ENCODE measurements at regions of chr3 and their contacts with region 1.

Region 1: DNA sequence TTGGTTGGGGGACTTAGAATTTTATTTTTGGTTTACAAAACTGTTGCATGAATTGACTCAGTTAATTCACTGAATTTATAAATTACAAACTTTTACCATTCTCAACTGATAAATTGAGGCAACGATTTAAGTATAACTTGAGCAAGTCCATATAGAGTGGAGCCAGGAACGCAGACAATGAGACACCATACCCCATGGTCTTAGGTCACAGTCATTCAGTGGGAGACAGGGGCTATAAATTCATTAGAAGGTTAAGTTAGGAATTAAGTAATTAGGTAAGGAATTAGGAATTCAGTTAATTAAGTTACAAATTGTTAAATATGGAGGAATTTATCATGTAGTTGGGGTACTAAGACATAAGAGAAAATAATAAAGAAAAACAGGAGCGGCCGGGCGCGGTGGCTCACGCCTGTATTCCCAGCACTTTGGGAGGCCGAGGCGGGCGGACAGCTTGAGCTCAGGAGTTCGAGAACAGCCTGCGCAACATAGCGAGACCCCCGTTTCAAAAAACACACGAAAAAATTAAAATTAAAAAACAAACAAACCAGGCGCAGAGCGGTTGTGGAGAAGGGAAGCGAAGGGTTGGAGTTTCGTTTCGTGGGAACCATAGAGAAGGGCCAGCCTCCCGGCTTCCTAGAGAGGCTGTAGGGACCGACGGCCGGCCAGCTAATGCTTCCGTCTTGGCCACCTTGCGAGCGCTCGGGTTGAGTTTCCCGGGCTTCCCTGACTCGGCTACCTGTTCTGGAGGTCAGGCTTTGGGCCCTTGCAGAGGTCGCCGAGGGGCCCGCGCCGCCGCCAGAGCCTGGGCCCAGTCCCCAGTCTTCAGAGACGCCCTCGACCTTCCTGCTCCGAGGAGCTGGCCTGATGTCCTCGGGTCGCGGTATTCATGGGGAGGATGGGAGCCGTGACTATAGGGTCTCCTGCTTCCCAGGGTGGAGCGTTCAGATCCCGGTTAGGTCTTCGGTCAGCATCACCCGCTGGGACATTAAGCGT is at the start of gene ZNF619:
- DNase-seq: peak; percentile 64
- ATAC-seq: peak; percentile 79
- H3K4me3 Mint-ChIP-seq: peak within 1 kb of the TSS; percentile 80
- H3K27ac Mint-ChIP-seq: peak within 1 kb of the TSS; percentile 83
- H3K4me1 Mint-ChIP-seq: peaks cover 15% of the 10 kb centered on the region
- H3K27me3 Mint-ChIP-seq: no peaks in the 10 kb centered on the region
- total RNA-seq, gene ZNF619: 5.6 to 7.0 TPM

Region 2: DNA sequence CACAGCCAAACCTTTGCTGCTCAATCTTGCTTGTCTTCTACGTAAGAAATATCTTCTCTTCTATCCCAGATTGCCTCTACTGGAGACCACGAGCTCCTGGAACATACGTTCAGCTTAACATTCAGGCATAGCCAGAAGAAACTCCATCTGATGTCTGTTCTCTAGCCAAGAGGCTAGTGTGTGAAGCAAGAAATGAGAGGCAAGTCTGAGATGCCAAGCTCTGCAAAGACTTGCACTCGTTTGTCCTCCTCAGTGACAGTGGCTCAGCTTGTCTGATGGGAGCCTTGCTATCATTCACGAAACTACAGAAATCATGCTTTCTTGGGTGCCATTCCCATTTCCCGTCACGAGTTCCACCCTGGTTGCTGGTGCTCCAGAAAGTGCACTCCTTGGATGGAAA is 1660.7 kb before region 1 on chr3 and contains the start of gene SCN10A:
- CTCF ChIA-PET with region 1: no interaction called
- POLR2A ChIA-PET with region 1: no interaction called
- intact Hi-C with region 1: no loop called
- DNase-seq: no peak
- ATAC-seq: no peak
- H3K4me3 Mint-ChIP-seq: no peak within 1 kb of the TSS
- H3K27ac Mint-ChIP-seq: no peak within 1 kb of the TSS
- H3K4me1 Mint-ChIP-seq: no peaks in the 10 kb centered on the region
- H3K27me3 Mint-ChIP-seq: peaks cover 8% of the 10 kb centered on the region
- total RNA-seq, gene SCN10A: not detected

Region 3: DNA sequence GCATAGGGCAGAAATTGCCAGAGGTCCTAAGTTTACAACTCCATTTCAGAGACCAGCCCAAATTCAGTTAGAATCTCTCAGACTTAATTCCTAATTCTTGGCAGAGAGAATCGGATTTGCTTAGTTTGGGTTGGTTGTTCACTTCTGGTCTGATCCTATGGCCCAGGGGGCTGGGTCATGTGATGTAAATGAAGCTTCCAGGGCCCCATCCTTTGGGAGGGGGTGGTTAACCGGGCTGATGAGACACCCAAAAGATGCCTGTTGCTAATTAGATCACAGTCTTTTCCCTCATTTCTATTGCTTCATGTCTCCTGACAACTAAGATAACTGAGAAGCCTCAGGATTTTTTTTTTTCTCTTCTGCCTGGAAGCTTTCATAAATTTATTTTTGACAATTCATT is 17.9 kb after region 1 on chr3:
- CTCF ChIA-PET with region 1: interaction called, 12 read pairs
- POLR2A ChIA-PET with region 1: no interaction called
- intact Hi-C with region 1: no loop called
- DNase-seq: no peak
- ATAC-seq: no peak
- H3K4me3 Mint-ChIP-seq: no peak overlapping the region
- H3K27ac Mint-ChIP-seq: no peak overlapping the region
- H3K4me1 Mint-ChIP-seq: no peaks in the 10 kb centered on the region
- H3K27me3 Mint-ChIP-seq: no peaks in the 10 kb centered on the region

Region 4: GRCh38 chr3:40505599-40506462 is 29.1 kb after region 1 on chr3 and contains the start of gene ZNF620:
- CTCF ChIA-PET with region 1: interaction called, 4 read pairs
- POLR2A ChIA-PET with region 1: no interaction called
- intact Hi-C with region 1: loop called in 1 of 2 experiments (anchors 2 kb)
- DNase-seq: peak; percentile 59
- ATAC-seq: peak; percentile 67
- H3K4me3 Mint-ChIP-seq: peak within 1 kb of the TSS; percentile 86
- H3K27ac Mint-ChIP-seq: peak within 1 kb of the TSS; percentile 92
- H3K4me1 Mint-ChIP-seq: peaks cover 29% of the 10 kb centered on the region
- H3K27me3 Mint-ChIP-seq: no peaks in the 10 kb centered on the region
- total RNA-seq, gene ZNF620: 3.8 to 3.9 TPM

Measured in activated CD4-positive, alpha-beta T cell treated with anti-CD3 and anti-CD28 coated beads for 36 hours (primary cell).